Activated CD4-positive, alpha-beta T cell treated with anti-CD3 and anti-CD28 coated beads for 36 hours (primary cell): ENCODE measurements at regions of chr12 and their contacts with region 1.

Region 1: GRCh38 chr12:46661110-46661845 is 164.5 kb downstream of the SLC38A4 start:
- DNase-seq: peak; percentile 11
- ATAC-seq: peak; percentile 79
- H3K4me3 Mint-ChIP-seq: no peak overlapping the region
- H3K27ac Mint-ChIP-seq: no peak overlapping the region
- H3K4me1 Mint-ChIP-seq: peaks cover 36% of the 10 kb centered on the region
- H3K27me3 Mint-ChIP-seq: no peaks in the 10 kb centered on the region

Region 2: GRCh38 chr12:46153268-46153872 is 507.9 kb before region 1 on chr12:
- CTCF ChIA-PET with region 1: no interaction called
- POLR2A ChIA-PET with region 1: no interaction called
- intact Hi-C with region 1: loop called in 1 of 2 experiments (anchors 1 kb)
- DNase-seq: no peak
- ATAC-seq: no peak
- H3K4me3 Mint-ChIP-seq: no peak overlapping the region
- H3K27ac Mint-ChIP-seq: no peak overlapping the region
- H3K4me1 Mint-ChIP-seq: peaks cover 9% of the 10 kb centered on the region
- H3K27me3 Mint-ChIP-seq: peaks cover under 1% of the 10 kb centered on the region

Region 3: DNA sequence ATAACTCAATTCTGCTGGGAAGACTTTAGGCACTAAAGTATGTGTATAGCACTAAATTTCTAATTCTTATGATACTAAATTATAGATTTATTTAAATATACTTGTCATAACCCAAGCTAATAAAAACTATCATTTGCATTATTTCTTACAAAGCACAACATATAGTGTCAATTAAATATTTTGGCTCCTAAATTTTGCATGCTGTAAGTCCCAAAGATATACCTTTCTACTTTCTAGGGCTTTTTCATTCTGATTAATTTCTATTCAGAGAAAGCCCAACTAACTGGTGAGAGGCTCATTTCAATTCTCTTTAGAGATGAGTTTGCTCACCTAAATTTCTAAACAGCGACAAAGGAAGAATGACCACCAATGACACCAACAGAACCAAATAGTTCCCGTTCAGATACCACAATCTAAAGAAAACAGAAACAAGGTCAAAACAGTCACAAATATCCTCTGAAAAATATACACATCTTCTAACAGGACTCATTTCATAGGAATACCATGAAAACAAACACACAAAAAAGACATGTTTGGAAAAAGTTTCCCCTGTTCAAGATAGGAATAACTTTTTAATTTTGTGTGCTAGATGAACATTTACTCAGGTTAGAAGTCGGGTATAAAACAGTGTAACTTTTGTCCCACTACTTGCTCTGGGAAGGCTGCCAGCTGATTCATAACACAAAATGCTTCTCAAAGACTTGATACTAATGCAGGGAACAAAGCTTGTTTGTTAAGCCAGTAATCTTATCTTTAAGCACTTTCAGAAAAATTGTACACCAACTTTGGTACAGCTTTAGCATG is 296.3 kb before region 1 on chr12:
- CTCF ChIA-PET with region 1: interaction called, 3 read pairs
- POLR2A ChIA-PET with region 1: no interaction called
- intact Hi-C with region 1: loop called (anchors 2 kb)
- DNase-seq: peak; percentile 37
- ATAC-seq: no peak
- H3K4me3 Mint-ChIP-seq: no peak overlapping the region
- H3K27ac Mint-ChIP-seq: peak overlapping the region; percentile 42
- H3K4me1 Mint-ChIP-seq: peaks cover 78% of the 10 kb centered on the region
- H3K27me3 Mint-ChIP-seq: no peaks in the 10 kb centered on the region

Region 4: DNA sequence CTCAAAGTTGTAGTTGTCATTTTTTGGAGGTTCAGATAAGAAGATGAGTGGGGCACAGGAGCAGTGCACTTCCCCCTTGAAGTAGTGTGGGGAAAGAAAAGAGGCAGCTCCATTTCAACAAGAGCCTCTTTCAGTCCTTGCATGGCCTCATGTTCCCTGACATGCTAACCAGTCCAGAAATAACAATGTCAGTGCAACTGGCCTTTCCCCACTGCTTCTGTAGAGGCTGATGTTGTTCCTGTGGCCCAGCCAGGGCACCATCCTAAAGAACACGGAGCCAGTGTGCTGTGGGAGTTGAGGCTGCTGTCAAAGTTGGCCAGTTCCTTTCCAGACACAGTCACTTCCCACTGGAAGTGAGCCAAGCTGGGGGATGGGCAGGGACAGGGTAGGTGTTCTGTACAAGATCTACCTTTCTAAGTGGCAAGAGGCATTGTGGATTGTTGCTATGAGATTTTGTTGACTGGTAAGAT is 211.0 kb before region 1 on chr12:
- CTCF ChIA-PET with region 1: interaction called, 3 read pairs
- POLR2A ChIA-PET with region 1: no interaction called
- intact Hi-C with region 1: loop called (anchors 5 kb)
- DNase-seq: no peak
- ATAC-seq: no peak
- H3K4me3 Mint-ChIP-seq: no peak overlapping the region
- H3K27ac Mint-ChIP-seq: peak overlapping the region; percentile 56
- H3K4me1 Mint-ChIP-seq: peaks cover 42% of the 10 kb centered on the region
- H3K27me3 Mint-ChIP-seq: no peaks in the 10 kb centered on the region

Region 5: DNA sequence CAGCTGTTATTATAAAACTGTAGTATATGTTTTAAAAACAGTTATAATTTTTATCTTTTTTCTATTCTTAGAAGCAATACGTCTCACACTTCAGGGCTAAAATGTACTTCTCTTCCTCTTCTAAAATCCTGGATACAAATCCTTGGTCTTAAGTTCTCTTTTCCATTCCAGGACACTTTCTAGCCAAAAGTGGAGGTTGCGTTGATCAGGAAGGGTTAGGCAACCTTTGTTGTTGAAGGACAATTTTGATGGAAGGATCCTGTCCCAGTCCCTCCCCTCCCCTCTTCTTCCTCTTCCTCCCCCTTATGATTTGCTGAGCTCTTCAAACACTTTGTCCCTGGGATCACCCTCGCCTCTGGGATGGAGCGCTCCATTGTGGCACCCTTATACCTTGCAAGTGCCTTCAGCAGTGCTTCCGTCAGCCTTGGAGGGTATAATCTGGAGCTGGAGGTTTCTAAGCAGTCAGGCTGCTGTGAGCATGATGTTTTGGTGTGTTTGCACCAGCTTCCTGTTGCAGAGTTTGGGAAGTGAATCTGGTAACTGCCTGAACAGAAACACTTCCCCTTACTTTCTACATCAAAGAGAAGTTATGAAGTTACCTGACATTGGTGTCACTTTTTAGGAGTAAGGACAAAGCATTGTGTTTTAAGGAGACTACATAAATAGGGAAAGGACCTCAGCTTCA is 201.3 kb before region 1 on chr12:
- CTCF ChIA-PET with region 1: interaction called, 3 read pairs
- POLR2A ChIA-PET with region 1: no interaction called
- intact Hi-C with region 1: loop called in 1 of 2 experiments (anchors 5 kb)
- DNase-seq: peak; percentile 17
- ATAC-seq: no peak
- H3K4me3 Mint-ChIP-seq: peak overlapping the region; percentile 46
- H3K27ac Mint-ChIP-seq: peak overlapping the region; percentile 88
- H3K4me1 Mint-ChIP-seq: peaks cover 56% of the 10 kb centered on the region
- H3K27me3 Mint-ChIP-seq: no peaks in the 10 kb centered on the region

Region 6: GRCh38 chr12:46516933-46517578 is 144.2 kb before region 1 on chr12:
- CTCF ChIA-PET with region 1: interaction called, 3 read pairs
- POLR2A ChIA-PET with region 1: no interaction called
- intact Hi-C with region 1: loop called in 1 of 2 experiments (anchors 5 kb)
- DNase-seq: peak; percentile 49
- ATAC-seq: peak; percentile 93
- H3K4me3 Mint-ChIP-seq: peak overlapping the region; percentile 3
- H3K27ac Mint-ChIP-seq: peak overlapping the region; percentile 90
- H3K4me1 Mint-ChIP-seq: peaks cover 61% of the 10 kb centered on the region
- H3K27me3 Mint-ChIP-seq: no peaks in the 10 kb centered on the region

Region 7: GRCh38 chr12:46556105-46556559 is 105.1 kb before region 1 on chr12:
- CTCF ChIA-PET with region 1: no interaction called
- POLR2A ChIA-PET with region 1: no interaction called
- intact Hi-C with region 1: loop called (anchors 5 kb)
- DNase-seq: no peak
- ATAC-seq: no peak
- H3K4me3 Mint-ChIP-seq: no peak overlapping the region
- H3K27ac Mint-ChIP-seq: no peak overlapping the region
- H3K4me1 Mint-ChIP-seq: peaks cover 41% of the 10 kb centered on the region
- H3K27me3 Mint-ChIP-seq: no peaks in the 10 kb centered on the region

Region 8: DNA sequence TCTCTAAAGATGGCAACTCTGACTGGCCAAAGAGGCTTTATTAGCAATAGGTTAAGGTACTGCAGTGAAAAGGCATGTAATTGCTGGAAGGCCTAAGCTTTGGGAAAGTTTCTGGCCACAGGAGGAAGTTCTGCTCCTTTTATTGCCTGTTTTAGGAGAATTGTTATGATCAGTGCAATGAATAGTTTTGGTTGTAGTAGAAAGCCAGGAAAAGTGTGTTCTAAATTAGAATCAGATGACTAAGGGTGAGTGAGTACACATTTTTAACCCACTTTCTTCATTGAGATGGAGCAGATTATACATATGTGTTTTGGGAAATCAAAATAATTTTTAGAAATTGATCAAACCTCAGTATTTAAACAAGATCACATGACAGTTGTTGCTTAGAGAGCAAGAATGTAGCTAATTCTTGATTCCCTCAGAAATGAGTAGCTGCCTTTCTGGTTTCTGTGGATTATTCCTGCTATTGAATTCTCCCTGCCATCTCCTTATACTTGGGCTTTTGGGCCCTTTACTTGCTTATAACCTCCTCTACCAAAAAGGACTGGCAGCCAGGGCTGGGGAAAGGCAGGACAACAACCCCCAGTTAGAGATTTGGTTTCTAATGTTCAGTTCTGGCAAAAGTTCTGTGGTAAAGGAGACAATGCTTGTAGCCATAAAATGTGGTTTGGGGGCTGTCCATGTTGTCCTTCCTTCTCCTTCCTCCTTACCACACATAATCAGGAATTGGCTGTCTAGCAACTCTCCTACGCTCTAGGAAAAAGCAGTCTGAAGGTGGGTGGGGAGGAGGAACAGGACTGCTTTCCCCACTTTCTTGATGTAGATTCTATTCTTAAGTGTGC is 52.6 kb before region 1 on chr12:
- CTCF ChIA-PET with region 1: no interaction called
- POLR2A ChIA-PET with region 1: no interaction called
- intact Hi-C with region 1: no loop called
- DNase-seq: no peak
- ATAC-seq: no peak
- H3K4me3 Mint-ChIP-seq: no peak overlapping the region
- H3K27ac Mint-ChIP-seq: peak overlapping the region; percentile 44
- H3K4me1 Mint-ChIP-seq: peaks cover 27% of the 10 kb centered on the region
- H3K27me3 Mint-ChIP-seq: no peaks in the 10 kb centered on the region